ENCODE measurements at regions of chr1 and their contacts with region 1.

Region 1: DNA sequence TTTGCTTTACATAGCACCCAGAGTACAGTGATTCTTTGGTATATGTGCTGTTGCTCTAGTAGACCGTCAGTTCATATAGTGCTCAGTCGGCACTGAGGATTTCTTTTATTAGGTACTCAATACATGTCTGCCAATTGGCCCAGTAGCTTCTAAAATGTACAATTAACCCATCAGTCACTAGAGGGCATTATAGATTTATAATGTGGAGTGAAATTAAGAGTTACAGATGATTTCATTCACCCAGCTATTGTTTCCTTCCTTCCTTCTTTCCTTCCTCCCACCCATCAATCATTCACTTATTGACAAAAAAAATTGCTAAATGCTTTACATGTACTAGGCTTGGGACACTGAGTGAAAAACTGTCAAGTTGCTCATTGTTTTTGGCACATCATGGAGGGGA is 263.6 kb upstream of the USP24 start:
- DNase-seq: peak; percentile 50
- H3K4me3 ChIP-seq: no peak overlapping the region
- H3K27ac ChIP-seq: no peak overlapping the region
- H3K4me1 ChIP-seq: no peaks in the 10 kb centered on the region
- H3K27me3 ChIP-seq: peaks cover 57% of the 10 kb centered on the region
- CTCF ChIP-seq: peak; percentile 59

Region 2: GRCh38 chr1:55490547-55490946 is 11.8 kb after region 1 on chr1:
- CTCF ChIA-PET with region 1: no interaction called
- POLR2A ChIA-PET with region 1: no interaction called
- intact Hi-C with region 1: no loop called
- DNase-seq: no peak
- H3K4me3 ChIP-seq: no peak overlapping the region
- H3K27ac ChIP-seq: no peak overlapping the region
- H3K4me1 ChIP-seq: no peaks in the 10 kb centered on the region
- H3K27me3 ChIP-seq: no peaks in the 10 kb centered on the region
- CTCF ChIP-seq: no peak

Region 3: DNA sequence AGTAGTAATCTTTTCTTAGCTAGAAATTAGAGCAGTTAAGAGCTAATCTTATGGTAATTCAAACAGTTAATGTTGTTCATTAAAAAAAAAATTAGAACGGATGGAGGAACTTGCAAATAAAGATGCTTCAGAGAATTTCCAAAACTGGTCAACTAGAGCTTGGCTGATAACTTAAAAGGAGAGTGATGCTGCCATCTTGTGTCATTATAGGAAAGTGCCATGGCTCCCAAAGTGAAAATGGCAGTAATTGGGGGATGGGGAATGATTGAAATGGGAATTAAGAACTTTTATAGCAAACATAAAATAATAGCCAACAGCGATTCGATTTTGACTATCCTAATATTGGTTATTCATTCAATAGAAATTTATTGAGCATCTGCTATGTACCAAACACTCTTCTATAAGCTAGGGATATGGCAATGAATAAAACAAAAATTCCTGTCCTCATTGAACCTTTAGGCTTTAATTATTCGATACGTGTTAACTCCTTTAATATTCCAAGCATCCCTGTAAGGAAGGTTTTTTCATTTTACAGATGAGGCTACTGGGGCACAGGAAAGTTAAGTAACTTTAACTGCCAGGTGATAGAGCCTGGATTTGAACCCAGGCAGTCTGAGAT is 1106.3 kb after region 1 on chr1:
- CTCF ChIA-PET with region 1: interaction called, 5 read pairs
- POLR2A ChIA-PET with region 1: no interaction called
- intact Hi-C with region 1: loop called (anchors 5 kb)
- DNase-seq: peak; percentile 65
- H3K4me3 ChIP-seq: no peak overlapping the region
- H3K27ac ChIP-seq: no peak overlapping the region
- H3K4me1 ChIP-seq: peaks cover under 1% of the 10 kb centered on the region
- H3K27me3 ChIP-seq: no peaks in the 10 kb centered on the region
- CTCF ChIP-seq: peak; percentile 80

Region 4: GRCh38 chr1:56709269-56709880 is 1230.6 kb after region 1 on chr1:
- CTCF ChIA-PET with region 1: no interaction called
- POLR2A ChIA-PET with region 1: no interaction called
- intact Hi-C with region 1: loop called (anchors 10 kb)
- DNase-seq: peak; percentile 68
- H3K4me3 ChIP-seq: no peak overlapping the region
- H3K27ac ChIP-seq: no peak overlapping the region
- H3K4me1 ChIP-seq: no peaks in the 10 kb centered on the region
- H3K27me3 ChIP-seq: peaks cover 19% of the 10 kb centered on the region
- CTCF ChIP-seq: peak; percentile 69